Mammary epithelial cell (primary cell): ENCODE measurements at regions of chr21 and their contacts with region 1.

Region 1: DNA sequence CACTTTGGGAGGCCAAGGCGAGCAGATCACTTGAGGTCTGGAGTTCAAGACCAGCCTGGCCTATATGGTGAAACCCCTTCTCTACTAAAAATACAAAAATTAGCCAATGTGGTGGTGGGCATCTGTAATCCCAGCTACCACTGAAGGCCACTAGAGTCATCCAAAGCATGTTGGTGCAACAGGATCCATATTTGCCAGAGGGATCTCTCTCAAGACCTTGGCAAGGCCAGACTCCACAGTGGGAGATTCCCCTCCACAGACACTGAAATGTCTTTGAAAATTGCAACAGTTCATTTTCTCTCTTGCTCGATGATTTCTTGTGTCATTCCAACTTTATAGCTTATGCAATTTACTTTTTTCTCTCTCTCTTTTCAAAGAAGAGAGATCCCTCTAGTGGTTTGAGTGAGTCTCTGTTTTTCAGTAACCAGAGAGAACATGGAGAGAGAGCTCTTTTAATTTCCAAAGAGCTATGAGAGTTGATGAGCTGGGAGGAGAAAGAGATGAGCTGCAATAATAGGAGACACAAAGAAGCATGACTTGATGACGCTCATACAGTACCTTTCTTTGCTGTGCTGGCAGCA is 176.8 kb upstream of the USP25 start:
- DNase-seq: peak; percentile 38
- H3K4me3 ChIP-seq: no peak overlapping the region
- H3K27ac ChIP-seq: no peak overlapping the region
- H3K4me1 ChIP-seq: no peaks in the 10 kb centered on the region
- H3K27me3 ChIP-seq: no peaks in the 10 kb centered on the region
- CTCF ChIP-seq: peak; percentile 56 to 72

Region 2: DNA sequence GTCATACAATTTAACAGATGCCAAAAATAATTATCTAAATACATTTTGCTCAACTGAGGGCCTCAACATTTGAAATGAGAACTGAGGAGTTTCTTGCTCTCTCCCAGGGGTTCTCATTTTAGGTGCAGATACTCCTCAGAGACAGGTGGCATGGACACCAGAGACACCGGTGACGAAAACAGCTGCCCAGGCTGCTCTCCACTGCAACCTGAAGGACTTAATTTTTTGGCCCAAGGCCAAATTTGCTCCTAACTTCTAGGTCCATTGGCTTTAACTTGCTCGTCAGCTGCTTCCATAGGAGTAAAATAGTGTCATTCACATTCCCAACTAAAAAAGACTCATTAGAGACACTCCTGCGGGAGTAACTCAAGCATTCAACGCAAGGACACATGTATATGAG is 575.2 kb before region 1 on chr21:
- CTCF ChIA-PET with region 1: interaction called, 16 read pairs
- dilution Hi-C with region 1: no loop called
- in situ Hi-C with region 1: no loop called
- intact Hi-C with region 1: no loop called
- DNase-seq: no peak
- H3K4me3 ChIP-seq: no peak overlapping the region
- H3K27ac ChIP-seq: no peak overlapping the region
- H3K4me1 ChIP-seq: no peaks in the 10 kb centered on the region
- H3K27me3 ChIP-seq: no peaks in the 10 kb centered on the region
- CTCF ChIP-seq: no peak

Region 3: DNA sequence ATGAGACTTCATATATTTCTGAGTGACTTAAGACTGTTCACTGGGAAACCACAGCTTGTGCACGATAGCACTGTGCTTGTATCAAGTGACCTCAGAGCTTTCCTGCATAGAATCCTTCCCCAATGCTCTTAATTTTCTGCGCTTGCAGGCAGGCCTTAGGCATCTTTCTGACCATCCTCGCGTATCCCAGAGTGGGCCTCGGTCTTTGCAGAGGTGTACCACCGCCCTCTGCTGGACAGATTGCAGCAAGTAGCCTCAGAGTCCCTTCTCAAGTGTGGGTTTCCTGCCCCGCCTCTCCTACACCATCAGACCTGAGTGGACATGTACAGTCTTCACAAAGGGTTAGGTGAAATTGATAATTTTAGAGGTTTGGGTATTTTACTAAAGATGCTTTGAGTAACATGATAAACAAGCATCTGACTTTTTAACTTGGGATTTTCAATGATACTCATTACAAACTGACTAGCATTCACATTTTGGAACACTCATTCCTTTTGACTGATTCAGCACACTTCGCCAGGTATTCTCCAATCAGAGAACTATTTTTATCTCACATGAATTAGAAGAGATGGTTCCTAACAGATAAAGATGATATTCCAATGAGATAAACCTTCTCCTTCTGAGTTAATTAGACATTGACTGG is 69.7 kb before region 1 on chr21:
- CTCF ChIA-PET with region 1: interaction called, 6 read pairs
- dilution Hi-C with region 1: no loop called
- in situ Hi-C with region 1: no loop called
- intact Hi-C with region 1: loop called (anchors 1 kb)
- DNase-seq: peak; percentile 78
- H3K4me3 ChIP-seq: no peak overlapping the region
- H3K27ac ChIP-seq: no peak overlapping the region
- H3K4me1 ChIP-seq: peaks cover 4% of the 10 kb centered on the region
- H3K27me3 ChIP-seq: no peaks in the 10 kb centered on the region
- CTCF ChIP-seq: peak; percentile 90